Sigmoid colon (tissue), 7 donors: ENCODE measurements at regions of chr19 and their contacts with region 1.

Region 1: GRCh38 chr19:10864538-10864899 is 6.8 kb upstream of the CARM1 start:
- DNase-seq: peak; percentile 91
- H3K4me3 ChIP-seq: no peak overlapping the region
- H3K27ac ChIP-seq: peak overlapping the region in 1 of 4 donors; percentile 46
- H3K4me1 ChIP-seq: peaks cover 0 to 7% (median 2%) of the 10 kb centered on the region in 4 donors
- H3K27me3 ChIP-seq: no peaks in the 10 kb centered on the region
- CTCF ChIP-seq: peak; percentile 71 to 86 (median 82)
- EP300 ChIP-seq: no peak
- POLR2A ChIP-seq: no peak

Region 2: DNA sequence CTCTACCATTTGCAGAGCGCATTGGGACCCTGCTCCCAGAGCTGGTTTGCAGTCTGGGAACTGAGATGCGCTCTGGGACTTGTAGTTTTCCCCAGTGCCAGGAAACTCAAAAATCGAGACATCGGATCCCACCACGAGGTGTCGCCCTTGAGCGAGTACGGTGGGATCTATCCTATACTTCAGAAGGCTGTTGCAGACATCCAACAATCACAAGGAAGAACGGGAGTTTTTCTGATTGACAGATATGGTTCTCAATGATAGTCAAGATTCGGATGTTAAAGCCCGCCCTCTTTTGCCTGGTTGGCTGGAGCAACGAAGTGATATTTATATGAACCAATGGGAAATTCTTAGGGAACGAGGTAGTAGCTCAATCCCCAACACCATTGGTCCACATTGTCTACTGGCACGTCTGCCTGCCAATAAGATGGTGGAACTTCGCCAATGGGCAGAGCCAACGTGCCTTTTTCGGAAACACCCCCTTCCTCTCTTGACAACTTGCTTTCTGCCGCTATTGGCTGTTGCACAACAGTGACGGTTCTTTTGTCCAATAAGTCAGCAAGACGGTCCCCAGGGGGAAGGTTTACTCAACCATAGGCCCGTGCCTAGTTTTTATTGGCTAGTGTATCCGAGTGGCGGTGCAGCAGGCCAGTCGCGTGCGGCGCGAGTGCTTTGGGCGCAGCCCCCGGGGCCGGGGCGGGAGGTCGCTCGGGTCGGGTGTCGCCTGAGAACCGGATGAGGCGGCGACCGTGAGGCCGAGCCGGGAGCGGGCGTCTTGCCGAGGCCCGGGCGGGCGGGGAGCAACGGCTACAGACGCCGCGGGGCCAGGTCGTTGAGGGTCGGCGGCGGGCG is 146.9 kb before region 1 on chr19 and contains the start of gene DNM2:
- intact Hi-C with region 1: loop called (anchors 1 kb)
- DNase-seq: peak; percentile 100
- H3K4me3 ChIP-seq: peak within 1 kb of the TSS; percentile 93 to 100 (median 100)
- H3K27ac ChIP-seq: peak within 1 kb of the TSS; percentile 94 to 98 (median 97)
- H3K4me1 ChIP-seq: peaks cover 0 to 44% (median 37%) of the 10 kb centered on the region in 4 donors
- H3K27me3 ChIP-seq: no peaks in the 10 kb centered on the region
- CTCF ChIP-seq: peak; percentile 45 to 88 (median 66)
- EP300 ChIP-seq: no peak
- POLR2A ChIP-seq: peak in 1 of 2 donors; percentile 24
- total RNA-seq, gene DNM2: 53.2 to 96.7 (median 64.1) TPM

Region 3: GRCh38 chr19:10748924-10749434 is 115.5 kb before region 1 on chr19:
- intact Hi-C with region 1: no loop called
- DNase-seq: no peak
- H3K4me3 ChIP-seq: no peak overlapping the region
- H3K27ac ChIP-seq: peak overlapping the region; percentile 25 to 57 (median 43)
- H3K4me1 ChIP-seq: peaks cover 0 to 60% (median 46%) of the 10 kb centered on the region in 4 donors
- H3K27me3 ChIP-seq: no peaks in the 10 kb centered on the region
- CTCF ChIP-seq: no peak
- EP300 ChIP-seq: no peak
- POLR2A ChIP-seq: no peak

Region 4: DNA sequence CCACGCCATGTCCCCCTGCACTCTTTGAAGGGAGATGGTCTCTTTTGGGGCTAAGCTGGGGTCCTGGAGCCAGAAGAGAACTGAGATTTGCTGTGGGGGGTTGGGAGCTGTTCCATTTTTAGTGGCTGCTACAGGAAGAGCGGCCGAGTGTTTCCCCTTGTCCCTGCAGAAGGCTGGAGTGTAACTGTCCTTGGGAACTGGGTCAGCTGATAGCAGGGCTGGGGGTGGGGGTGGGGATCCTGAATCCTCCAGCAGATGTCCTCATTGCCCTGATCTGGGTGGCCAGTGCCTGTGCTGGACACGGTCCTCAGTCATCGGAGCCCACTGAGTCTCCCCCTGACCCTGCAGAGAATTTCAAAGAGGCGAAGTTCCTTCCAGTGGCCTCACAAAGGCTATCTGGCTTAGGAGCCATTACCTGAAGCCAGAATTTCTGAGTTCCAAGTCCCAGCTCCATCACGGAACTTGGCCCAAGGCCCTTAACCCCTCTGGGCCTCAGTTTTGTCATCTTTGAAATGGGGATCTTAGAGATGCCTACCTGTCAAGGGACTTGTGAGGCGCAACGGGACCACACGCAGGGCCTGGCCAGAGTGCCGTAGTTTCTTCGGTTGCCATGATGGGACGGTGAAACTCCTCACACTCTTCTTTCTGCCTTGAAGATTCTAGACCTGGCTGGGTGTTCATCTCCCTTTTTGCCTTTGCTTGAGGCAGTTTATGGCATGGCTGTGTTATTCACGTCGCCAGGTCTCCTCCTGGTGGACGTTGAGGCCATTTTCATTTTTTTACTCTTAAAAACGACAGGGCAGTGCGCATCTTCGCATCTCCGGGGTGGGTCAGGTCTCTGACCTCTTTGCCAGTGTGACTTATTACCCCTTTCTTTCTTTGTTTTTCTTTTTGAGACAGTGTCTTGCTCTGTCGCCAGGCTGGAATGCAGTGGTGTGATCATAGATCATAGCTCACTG is 94.7 kb before region 1 on chr19:
- intact Hi-C with region 1: loop called (anchors 5 kb)
- DNase-seq: peak; percentile 73
- H3K4me3 ChIP-seq: no peak overlapping the region
- H3K27ac ChIP-seq: peak overlapping the region; percentile 27 to 72 (median 58)
- H3K4me1 ChIP-seq: peaks cover 0 to 45% (median 38%) of the 10 kb centered on the region in 4 donors
- H3K27me3 ChIP-seq: no peaks in the 10 kb centered on the region
- CTCF ChIP-seq: peak in 3 of 4 experiments; percentile 28 to 42 (median 29)
- EP300 ChIP-seq: no peak
- POLR2A ChIP-seq: no peak

Region 5: GRCh38 chr19:10812902-10813404 is 51.6 kb before region 1 on chr19:
- intact Hi-C with region 1: no loop called
- DNase-seq: peak; percentile 83
- H3K4me3 ChIP-seq: no peak overlapping the region
- H3K27ac ChIP-seq: peak overlapping the region; percentile 12 to 77 (median 49)
- H3K4me1 ChIP-seq: peaks cover 0 to 32% (median 19%) of the 10 kb centered on the region in 4 donors
- H3K27me3 ChIP-seq: no peaks in the 10 kb centered on the region
- CTCF ChIP-seq: no peak
- EP300 ChIP-seq: no peak
- POLR2A ChIP-seq: no peak

Region 6: GRCh38 chr19:10835754-10836477 is 28.6 kb before region 1 on chr19 and contains the start of gene TMED1:
- intact Hi-C with region 1: loop called (anchors 2 kb)
- DNase-seq: peak; percentile 100
- H3K4me3 ChIP-seq: peak within 1 kb of the TSS; percentile 53 to 76 (median 62)
- H3K27ac ChIP-seq: peak within 1 kb of the TSS; percentile 95 to 99 (median 97)
- H3K4me1 ChIP-seq: peaks cover 0 to 11% (median 6%) of the 10 kb centered on the region in 4 donors
- H3K27me3 ChIP-seq: no peaks in the 10 kb centered on the region
- CTCF ChIP-seq: peak; percentile 25 to 65 (median 31)
- EP300 ChIP-seq: no peak
- POLR2A ChIP-seq: peak in 1 of 2 donors; percentile 37
- total RNA-seq, gene TMED1: 14.1 to 35.3 (median 28.9) TPM

Region 7: DNA sequence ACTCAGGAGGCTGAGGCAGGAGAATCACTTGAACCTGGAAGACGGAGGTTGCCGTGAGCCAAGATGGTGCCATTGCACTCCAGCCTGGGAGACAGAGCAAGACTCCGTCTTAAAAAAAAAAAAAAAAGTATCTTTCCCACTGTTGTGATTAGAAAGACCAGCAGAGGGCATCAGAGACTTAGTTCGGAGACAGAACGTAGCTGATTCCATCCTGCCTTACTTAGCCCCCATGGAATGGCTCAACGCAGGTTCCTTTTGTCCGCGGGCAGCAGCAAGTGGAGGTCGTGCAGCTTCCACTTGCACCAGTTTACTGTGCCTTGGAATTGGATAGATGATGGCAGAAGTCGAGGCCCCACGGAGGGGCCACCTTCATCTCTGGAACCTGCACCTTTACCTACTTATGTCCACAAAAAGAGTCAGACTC is 72.2 kb after region 1 on chr19:
- intact Hi-C with region 1: no loop called
- DNase-seq: no peak
- H3K4me3 ChIP-seq: peak overlapping the region in 1 of 4 donors; percentile 24
- H3K27ac ChIP-seq: peak overlapping the region; percentile 40 to 61 (median 50)
- H3K4me1 ChIP-seq: peaks cover 0 to 9% (median under 1%) of the 10 kb centered on the region in 4 donors
- H3K27me3 ChIP-seq: no peaks in the 10 kb centered on the region
- CTCF ChIP-seq: peak; percentile 50 to 76 (median 60)
- EP300 ChIP-seq: no peak
- POLR2A ChIP-seq: no peak